ENCODE measurements at regions of chr10 and their contacts with region 1.

Region 1: DNA sequence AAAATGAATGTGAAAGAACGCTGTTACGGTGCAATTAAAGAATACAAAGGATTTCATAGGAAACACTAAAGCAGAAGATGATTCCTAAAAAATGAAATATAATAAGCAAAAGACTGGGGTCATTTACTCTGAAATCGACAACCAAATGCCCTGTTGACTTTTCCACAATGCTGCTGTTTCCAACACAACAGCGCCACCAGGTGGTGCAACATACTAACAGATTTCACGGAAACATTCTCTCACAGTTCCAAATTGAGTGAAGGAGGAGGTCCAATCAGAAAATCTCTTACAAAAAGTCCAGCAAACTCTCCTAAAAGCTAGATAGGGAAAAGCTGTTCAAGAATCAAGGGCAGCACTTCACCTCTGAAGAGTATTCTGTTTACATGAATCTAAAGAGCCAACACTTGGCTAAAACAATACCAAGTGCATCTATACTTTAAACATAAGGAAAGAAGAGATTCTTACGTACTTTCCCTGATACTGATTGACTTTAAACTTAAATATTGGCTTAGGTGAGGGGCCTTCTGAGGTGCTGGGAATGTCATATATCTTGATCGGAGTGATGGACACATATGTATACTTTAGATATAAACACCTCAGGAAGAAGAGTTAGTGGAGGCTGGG is 55.9 kb downstream of the UPF2 start:
- DNase-seq: peak; percentile 87
- ATAC-seq: peak; percentile 65
- H3K4me3 Mint-ChIP-seq: no peak overlapping the region
- H3K27ac Mint-ChIP-seq: no peak overlapping the region
- H3K4me1 Mint-ChIP-seq: peaks cover 6% of the 10 kb centered on the region
- H3K27me3 Mint-ChIP-seq: no peaks in the 10 kb centered on the region
- CTCF ChIP-seq: peak; percentile 95

Region 2: DNA sequence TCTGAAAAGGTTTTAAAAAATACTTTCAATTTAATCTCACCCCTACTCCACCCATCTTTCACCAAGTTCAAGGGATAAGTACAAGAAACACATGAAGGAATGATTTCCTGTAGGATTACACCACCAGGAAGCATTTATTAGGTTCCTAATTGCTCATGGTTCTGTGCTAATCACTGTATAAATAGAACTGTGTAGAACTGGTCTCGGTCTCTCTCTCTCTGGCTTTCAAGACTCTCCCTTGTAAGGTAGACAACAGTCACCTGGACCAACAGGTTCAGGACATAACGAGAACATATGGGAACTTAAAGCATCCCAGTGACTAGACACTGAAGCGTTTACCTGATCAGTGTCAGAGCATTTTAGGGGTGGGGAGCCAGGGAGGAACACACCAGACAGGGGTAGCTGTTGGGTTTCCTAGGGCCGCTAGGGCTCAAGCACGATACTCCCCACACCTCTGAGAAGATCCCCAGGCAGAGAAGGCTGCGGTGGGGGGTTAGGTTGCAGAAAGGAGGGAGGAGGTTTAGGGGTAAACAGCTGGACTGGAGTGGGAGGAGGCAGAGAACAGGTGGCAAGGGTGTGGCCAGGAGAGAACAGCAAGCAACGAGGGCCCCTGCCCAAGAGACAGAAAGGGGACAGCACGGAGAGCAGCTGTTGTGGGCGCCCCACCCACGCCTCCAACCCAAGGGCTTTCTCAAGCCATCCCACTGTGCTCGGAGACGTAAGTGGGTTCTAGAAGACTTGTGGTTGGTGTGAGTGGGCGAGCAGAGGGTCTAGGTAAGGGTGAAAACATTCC is 322.7 kb before region 1 on chr10:
- CTCF ChIA-PET with region 1: no interaction called
- POLR2A ChIA-PET with region 1: no interaction called
- intact Hi-C with region 1: no loop called
- DNase-seq: no peak
- ATAC-seq: no peak
- H3K4me3 Mint-ChIP-seq: no peak overlapping the region
- H3K27ac Mint-ChIP-seq: no peak overlapping the region
- H3K4me1 Mint-ChIP-seq: peaks cover 12% of the 10 kb centered on the region
- H3K27me3 Mint-ChIP-seq: no peaks in the 10 kb centered on the region
- CTCF ChIP-seq: no peak

Region 3: GRCh38 chr10:11782793-11783557 is 203.7 kb before region 1 on chr10:
- CTCF ChIA-PET with region 1: interaction called, 55 read pairs
- POLR2A ChIA-PET with region 1: no interaction called
- intact Hi-C with region 1: loop called (anchors 5 kb)
- DNase-seq: peak; percentile 3
- ATAC-seq: peak; percentile 75
- H3K4me3 Mint-ChIP-seq: no peak overlapping the region
- H3K27ac Mint-ChIP-seq: no peak overlapping the region
- H3K4me1 Mint-ChIP-seq: peaks cover 4% of the 10 kb centered on the region
- H3K27me3 Mint-ChIP-seq: peaks cover 5% of the 10 kb centered on the region
- CTCF ChIP-seq: peak; percentile 63

Region 4: DNA sequence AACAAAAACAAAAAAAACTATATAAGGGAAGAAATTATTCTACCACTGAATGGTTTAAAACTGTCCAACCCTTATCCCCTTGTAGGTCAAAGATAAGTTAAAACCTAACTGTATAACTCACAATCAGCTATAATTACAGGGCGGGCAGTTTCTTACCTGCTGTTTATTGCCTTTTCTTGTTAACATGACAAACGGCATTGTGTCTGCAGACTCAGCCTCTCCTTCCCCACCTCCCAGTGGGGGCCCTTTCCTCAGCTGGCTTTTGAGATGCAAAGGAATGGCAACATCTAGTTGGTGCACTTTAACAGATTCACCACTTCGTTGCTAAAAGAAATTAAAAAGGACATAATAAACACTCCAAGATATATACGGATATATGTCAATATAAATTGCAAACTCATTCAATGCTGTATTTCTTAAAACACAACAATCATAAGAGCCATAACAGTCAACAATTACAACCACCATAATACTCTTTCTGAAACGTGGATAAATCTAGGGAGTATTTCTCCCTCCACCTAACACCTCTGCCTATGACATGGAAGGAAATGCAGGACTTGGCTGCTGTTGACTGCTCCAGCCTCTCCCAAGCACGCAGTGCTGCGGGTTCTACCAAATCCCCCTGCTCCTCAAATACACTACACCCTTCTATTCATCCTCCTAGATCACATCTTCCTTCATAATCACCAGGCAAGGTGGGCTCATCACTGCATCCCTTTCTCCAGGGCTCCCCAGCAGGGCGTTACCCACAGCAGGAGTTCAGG is 50.1 kb before region 1 on chr10:
- CTCF ChIA-PET with region 1: interaction called, 10 read pairs
- POLR2A ChIA-PET with region 1: no interaction called
- intact Hi-C with region 1: no loop called
- DNase-seq: no peak
- ATAC-seq: no peak
- H3K4me3 Mint-ChIP-seq: no peak overlapping the region
- H3K27ac Mint-ChIP-seq: no peak overlapping the region
- H3K4me1 Mint-ChIP-seq: no peaks in the 10 kb centered on the region
- H3K27me3 Mint-ChIP-seq: no peaks in the 10 kb centered on the region
- CTCF ChIP-seq: no peak

Region 5: DNA sequence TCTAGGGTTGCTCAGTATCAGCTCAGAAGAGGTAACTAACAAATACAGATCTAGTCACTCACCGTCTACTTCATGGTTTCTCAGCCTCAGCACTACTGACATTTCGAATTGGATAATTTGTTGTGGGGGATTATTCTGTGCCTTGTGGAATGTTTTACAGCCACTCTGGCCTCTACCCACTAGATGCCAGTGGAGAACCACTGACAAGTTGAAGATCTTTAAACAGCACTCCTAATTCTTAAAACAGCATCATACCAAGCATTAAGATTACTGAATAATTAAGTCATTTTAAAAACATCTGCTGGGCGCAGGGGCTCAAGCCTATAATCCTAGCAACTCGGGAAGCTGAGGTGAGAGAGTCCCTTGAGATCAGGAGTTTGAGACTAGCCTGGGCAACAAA is 26.7 kb before region 1 on chr10:
- CTCF ChIA-PET with region 1: interaction called, 16 read pairs
- POLR2A ChIA-PET with region 1: no interaction called
- intact Hi-C with region 1: no loop called
- DNase-seq: no peak
- ATAC-seq: no peak
- H3K4me3 Mint-ChIP-seq: no peak overlapping the region
- H3K27ac Mint-ChIP-seq: no peak overlapping the region
- H3K4me1 Mint-ChIP-seq: no peaks in the 10 kb centered on the region
- H3K27me3 Mint-ChIP-seq: no peaks in the 10 kb centered on the region
- CTCF ChIP-seq: no peak

Region 6: DNA sequence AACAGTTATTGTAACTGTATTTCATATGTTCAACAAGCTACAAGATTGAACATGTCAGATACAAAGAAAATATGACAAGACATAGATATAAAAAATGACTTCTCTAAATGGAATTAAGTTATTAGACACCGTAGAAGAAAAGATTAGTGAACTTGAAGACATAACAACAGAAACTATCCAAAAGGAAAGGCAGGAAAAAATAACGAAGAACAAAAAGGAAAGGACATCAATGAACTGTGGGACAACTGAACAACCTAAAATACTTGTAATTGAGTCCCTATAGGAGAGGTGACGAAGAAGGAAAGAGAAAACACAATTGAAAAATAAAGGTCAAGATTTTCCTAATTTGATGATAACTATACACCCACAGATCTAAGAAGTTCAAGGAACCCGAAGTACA is 23.6 kb after region 1 on chr10:
- CTCF ChIA-PET with region 1: interaction called, 12 read pairs
- POLR2A ChIA-PET with region 1: no interaction called
- intact Hi-C with region 1: no loop called
- DNase-seq: no peak
- ATAC-seq: no peak
- H3K4me3 Mint-ChIP-seq: no peak overlapping the region
- H3K27ac Mint-ChIP-seq: peak overlapping the region; percentile 0
- H3K4me1 Mint-ChIP-seq: peaks cover 10% of the 10 kb centered on the region
- H3K27me3 Mint-ChIP-seq: no peaks in the 10 kb centered on the region
- CTCF ChIP-seq: no peak

Measured in activated CD8-positive, alpha-beta T cell treated with anti-CD3 and anti-CD28 coated beads for 36 hours (primary cell).